ENCODE measurements at regions of chr3 and their contacts with region 1.

Region 1: GRCh38 chr3:156151824-156152428 is 31.5 kb downstream of the KCNAB1 start:
- DNase-seq: peak; percentile 85
- H3K4me3 ChIP-seq: no peak overlapping the region
- H3K27ac ChIP-seq: peak overlapping the region in 3 of 4 donors; percentile 7 to 65 (median 54)
- H3K4me1 ChIP-seq: peaks cover 0 to 44% (median 38%) of the 10 kb centered on the region in 4 donors
- H3K27me3 ChIP-seq: no peaks in the 10 kb centered on the region
- CTCF ChIP-seq: peak; percentile 48 to 64 (median 58)
- EP300 ChIP-seq: no peak
- POLR2A ChIP-seq: no peak

Region 2: DNA sequence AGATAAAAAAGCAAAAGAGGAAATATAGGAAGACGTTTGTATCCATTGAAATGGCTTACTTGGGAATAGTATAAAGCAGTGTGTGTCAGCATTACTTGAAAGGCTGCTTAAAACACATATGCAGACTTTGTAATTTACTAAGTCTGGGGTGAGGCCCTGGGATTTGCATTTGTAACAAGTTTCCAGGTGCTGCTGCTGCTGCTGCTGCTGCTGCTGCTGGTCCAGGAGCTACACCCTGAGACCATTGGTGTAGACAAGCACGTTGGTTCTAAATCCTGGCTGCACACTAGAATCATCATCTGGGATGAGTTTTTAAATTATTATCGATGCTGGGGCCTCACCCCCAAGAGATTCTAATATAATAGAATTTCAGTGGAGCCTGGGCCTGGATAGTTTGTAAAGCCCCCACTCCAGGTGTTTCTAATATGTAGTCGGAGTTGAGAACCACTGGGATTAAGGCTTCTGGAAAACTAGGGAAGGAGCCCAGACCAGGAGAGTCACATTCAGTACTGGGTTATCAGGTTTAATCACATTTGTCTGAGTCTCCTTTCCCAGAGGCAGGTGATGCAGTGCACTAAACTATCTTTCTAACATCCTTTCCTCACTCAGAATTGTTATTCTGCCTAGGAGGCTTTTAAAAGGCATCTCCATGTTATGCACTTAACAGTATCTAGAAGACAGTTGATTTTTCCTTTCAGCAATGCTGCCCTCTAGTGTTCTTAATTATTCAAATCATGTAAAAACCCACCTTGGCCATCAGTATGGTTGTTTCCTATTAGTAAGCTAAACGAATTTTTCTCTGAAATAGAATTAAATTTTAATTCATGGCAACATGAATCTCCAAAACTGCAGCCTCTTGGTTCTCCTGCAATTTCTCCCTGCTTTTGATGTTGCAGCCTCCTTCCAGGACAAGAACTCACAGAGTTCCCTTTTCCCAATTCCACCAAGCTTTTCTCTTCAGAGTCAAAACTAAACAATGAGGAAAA is 357.6 kb after region 1 on chr3:
- intact Hi-C with region 1: loop called (anchors 1 kb)
- DNase-seq: no peak
- H3K4me3 ChIP-seq: no peak overlapping the region
- H3K27ac ChIP-seq: no peak overlapping the region
- H3K4me1 ChIP-seq: peaks cover 0 to 30% (median 8%) of the 10 kb centered on the region in 4 donors
- H3K27me3 ChIP-seq: no peaks in the 10 kb centered on the region
- CTCF ChIP-seq: peak in 3 of 4 experiments; percentile 51 to 65 (median 60)
- EP300 ChIP-seq: no peak
- POLR2A ChIP-seq: no peak

Region 3: GRCh38 chr3:156535162-156535627 is 383.3 kb after region 1 on chr3:
- intact Hi-C with region 1: loop called (anchors 2 kb)
- DNase-seq: peak; percentile 94
- H3K4me3 ChIP-seq: no peak overlapping the region
- H3K27ac ChIP-seq: peak overlapping the region; percentile 71 to 93 (median 85)
- H3K4me1 ChIP-seq: peaks cover 0 to 85% (median 61%) of the 10 kb centered on the region in 4 donors
- H3K27me3 ChIP-seq: no peaks in the 10 kb centered on the region
- CTCF ChIP-seq: no peak
- EP300 ChIP-seq: peak in 3 of 4 donors; percentile 42 to 77 (median 61)
- POLR2A ChIP-seq: no peak

Region 4: DNA sequence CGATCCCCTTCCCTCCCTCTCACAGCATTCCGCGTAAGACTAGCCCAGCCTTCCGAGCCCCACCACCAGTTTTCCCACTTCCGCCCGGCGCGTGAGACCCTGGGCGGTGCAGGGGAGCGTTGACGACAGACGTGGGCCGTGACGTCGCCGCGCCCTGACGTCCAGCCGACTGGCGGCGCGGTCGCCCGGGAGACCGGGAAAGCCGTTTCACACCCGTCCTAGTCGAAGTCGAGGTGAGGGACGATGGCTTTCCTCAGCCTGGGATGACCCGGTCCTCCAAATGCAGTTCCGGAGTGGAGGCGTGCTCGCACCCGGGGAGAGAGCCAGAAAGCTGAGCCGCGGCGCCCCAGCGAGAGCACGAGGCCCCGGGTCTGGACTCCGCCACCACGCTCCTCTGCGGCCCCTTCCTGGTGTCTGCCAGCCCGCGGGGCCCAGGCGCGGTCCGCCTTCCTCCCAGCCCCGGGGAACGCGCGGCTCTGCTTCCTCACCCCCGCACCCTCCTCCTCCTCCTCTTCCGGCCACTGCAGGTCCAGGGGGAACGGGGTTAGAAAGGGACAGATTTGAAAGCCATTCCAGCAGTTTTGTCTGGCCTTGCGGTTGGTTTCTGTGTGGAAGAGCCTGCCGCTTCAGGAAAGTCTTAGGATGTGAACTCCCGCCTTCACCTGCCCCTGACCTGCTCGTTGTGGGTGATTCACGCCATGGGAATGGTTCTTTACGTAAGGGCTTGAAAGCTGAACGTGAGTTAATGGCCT is 674.4 kb after region 1 on chr3 and contains the start of gene LEKR1:
- intact Hi-C with region 1: loop called (anchors 10 kb)
- DNase-seq: peak; percentile 92
- H3K4me3 ChIP-seq: peak within 1 kb of the TSS; percentile 57 to 69 (median 64)
- H3K27ac ChIP-seq: peak within 1 kb of the TSS; percentile 80 to 91 (median 84)
- H3K4me1 ChIP-seq: peaks cover 0 to 4% (median 0%) of the 10 kb centered on the region in 4 donors
- H3K27me3 ChIP-seq: no peaks in the 10 kb centered on the region
- CTCF ChIP-seq: no peak
- EP300 ChIP-seq: peak in 2 of 4 donors; percentile 48 to 70
- POLR2A ChIP-seq: peak; percentile 49 to 78
- total RNA-seq, gene LEKR1: 0.36 to 1.7 (median 0.68) TPM in 3 of 4 donors, not detected in the other

Region 5: GRCh38 chr3:157136647-157137387 is 984.9 kb after region 1 on chr3:
- intact Hi-C with region 1: loop called (anchors 5 kb)
- DNase-seq: no peak
- H3K4me3 ChIP-seq: no peak overlapping the region
- H3K27ac ChIP-seq: peak overlapping the region; percentile 31 to 75 (median 68)
- H3K4me1 ChIP-seq: peaks cover 0 to 40% (median 21%) of the 10 kb centered on the region in 4 donors
- H3K27me3 ChIP-seq: no peaks in the 10 kb centered on the region
- CTCF ChIP-seq: no peak
- EP300 ChIP-seq: no peak
- POLR2A ChIP-seq: no peak